H1 (cell line): ENCODE measurements at regions of chr2 and their contacts with region 1.

Region 1: GRCh38 chr2:29923110-29923721 is 1.8 kb upstream of the ALK start:
- DNase-seq: peak in 1 of 2 experiments; percentile 58
- H3K4me3 ChIP-seq: no peak overlapping the region
- H3K27ac ChIP-seq: no peak overlapping the region
- H3K4me1 ChIP-seq: peaks cover 3 to 18% (median 6%) of the 10 kb centered on the region in 4 experiments; a peak in 6 of 7 replicates
- H3K27me3 ChIP-seq: peaks cover 20 to 31% (median 30%) of the 10 kb centered on the region in 4 experiments
- CTCF ChIP-seq: peak in 2 of 3 experiments; percentile 79 to 90; a peak in 3 of 4 replicates
- EP300 ChIP-seq: no peak
- POLR2A ChIP-seq: no peak
- RAD21 ChIP-seq: peak; percentile 87 to 92

Region 2: GRCh38 chr2:29940706-29941105 is 17.5 kb after region 1 on chr2:
- CTCF ChIA-PET with region 1: interaction called, 19 read pairs
- POLR2A ChIA-PET with region 1: no interaction called
- DNase-seq: no peak
- H3K4me3 ChIP-seq: no peak overlapping the region
- H3K27ac ChIP-seq: no peak overlapping the region
- H3K4me1 ChIP-seq: no peaks in the 10 kb centered on the region
- H3K27me3 ChIP-seq: no peaks in the 10 kb centered on the region
- CTCF ChIP-seq: no peak
- EP300 ChIP-seq: no peak
- POLR2A ChIP-seq: no peak
- RAD21 ChIP-seq: no peak

Region 3: DNA sequence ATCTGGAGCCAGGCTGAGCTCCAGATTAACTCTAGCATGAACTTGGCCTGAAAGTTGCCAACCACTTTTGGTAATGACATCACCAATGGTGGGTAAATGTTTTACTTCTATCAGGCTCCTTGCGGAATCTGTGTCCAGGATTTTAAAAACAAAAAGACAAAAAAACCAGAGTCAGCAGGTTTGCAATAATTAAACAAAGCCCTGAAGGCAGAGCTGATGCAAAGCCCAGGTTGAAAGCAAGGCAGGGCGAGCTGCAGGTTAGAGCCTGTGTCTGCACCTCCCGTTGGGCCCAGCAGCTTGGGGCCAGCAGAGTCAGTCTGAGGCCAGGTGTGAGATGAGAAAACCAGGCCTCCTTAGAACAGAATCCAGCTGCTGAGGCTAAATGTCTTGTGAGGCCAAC is 27.3 kb after region 1 on chr2:
- CTCF ChIA-PET with region 1: interaction called, 19 read pairs
- POLR2A ChIA-PET with region 1: no interaction called
- DNase-seq: no peak
- H3K4me3 ChIP-seq: no peak overlapping the region
- H3K27ac ChIP-seq: no peak overlapping the region
- H3K4me1 ChIP-seq: no peaks in the 10 kb centered on the region; a peak in 1 of 7 replicates
- H3K27me3 ChIP-seq: no peaks in the 10 kb centered on the region
- CTCF ChIP-seq: no peak
- EP300 ChIP-seq: no peak
- POLR2A ChIP-seq: no peak
- RAD21 ChIP-seq: no peak

Region 4: DNA sequence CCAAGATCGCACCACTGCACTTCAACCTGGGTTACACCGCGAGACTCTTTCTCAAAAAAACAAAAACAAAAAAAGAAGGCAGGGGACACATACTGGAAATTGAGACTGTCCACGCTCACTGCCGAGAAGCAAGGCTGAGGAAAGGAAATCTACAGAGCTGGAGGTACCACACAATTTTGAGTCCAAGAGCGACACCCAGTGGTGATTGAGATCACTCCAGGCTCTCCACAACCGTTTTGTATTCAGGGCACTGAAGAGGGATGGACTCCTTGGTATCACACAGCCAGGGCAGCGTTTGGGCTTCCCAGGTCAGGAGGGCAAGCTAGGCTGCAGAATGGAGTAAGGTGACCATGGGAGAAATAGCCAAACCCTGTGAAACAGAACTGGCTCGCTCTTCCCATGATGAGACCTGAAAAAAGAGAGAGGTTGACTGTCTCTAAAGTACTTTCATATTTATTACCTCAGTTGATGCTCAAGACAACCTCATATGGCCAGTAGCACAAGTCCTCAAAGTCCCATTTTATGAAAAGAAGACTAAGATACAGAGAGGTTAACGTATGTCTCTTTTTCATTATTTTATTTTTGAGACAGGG is 149.1 kb after region 1 on chr2:
- CTCF ChIA-PET with region 1: interaction called, 50 read pairs
- POLR2A ChIA-PET with region 1: interaction called, 3 read pairs
- DNase-seq: peak; percentile 36 to 83
- H3K4me3 ChIP-seq: no peak overlapping the region
- H3K27ac ChIP-seq: no peak overlapping the region
- H3K4me1 ChIP-seq: peaks cover 0 to 3% (median 0%) of the 10 kb centered on the region in 4 experiments; a peak in 1 of 7 replicates
- H3K27me3 ChIP-seq: no peaks in the 10 kb centered on the region
- CTCF ChIP-seq: peak; percentile 69 to 95 (median 79)
- EP300 ChIP-seq: no peak
- POLR2A ChIP-seq: no peak
- RAD21 ChIP-seq: peak; percentile 93